ENCODE measurements at regions of chr12 and their contacts with region 1.

Region 1: GRCh38 chr12:132600048-132601032 is 10.0 kb downstream of the LRCOL1 start:
- DNase-seq: peak; percentile 60
- H3K4me3 Mint-ChIP-seq: peak overlapping the region; percentile 57
- H3K27ac Mint-ChIP-seq: no peak overlapping the region
- H3K4me1 Mint-ChIP-seq: peaks cover 32% of the 10 kb centered on the region
- H3K27me3 Mint-ChIP-seq: peaks cover 56% of the 10 kb centered on the region

Region 2: GRCh38 chr12:131990066-131990979 is 610.0 kb before region 1 on chr12:
- CTCF ChIA-PET with region 1: no interaction called
- intact Hi-C with region 1: no loop called
- DNase-seq: no peak
- H3K4me3 Mint-ChIP-seq: no peak overlapping the region
- H3K27ac Mint-ChIP-seq: no peak overlapping the region
- H3K4me1 Mint-ChIP-seq: peaks cover 6% of the 10 kb centered on the region
- H3K27me3 Mint-ChIP-seq: no peaks in the 10 kb centered on the region

Region 3: DNA sequence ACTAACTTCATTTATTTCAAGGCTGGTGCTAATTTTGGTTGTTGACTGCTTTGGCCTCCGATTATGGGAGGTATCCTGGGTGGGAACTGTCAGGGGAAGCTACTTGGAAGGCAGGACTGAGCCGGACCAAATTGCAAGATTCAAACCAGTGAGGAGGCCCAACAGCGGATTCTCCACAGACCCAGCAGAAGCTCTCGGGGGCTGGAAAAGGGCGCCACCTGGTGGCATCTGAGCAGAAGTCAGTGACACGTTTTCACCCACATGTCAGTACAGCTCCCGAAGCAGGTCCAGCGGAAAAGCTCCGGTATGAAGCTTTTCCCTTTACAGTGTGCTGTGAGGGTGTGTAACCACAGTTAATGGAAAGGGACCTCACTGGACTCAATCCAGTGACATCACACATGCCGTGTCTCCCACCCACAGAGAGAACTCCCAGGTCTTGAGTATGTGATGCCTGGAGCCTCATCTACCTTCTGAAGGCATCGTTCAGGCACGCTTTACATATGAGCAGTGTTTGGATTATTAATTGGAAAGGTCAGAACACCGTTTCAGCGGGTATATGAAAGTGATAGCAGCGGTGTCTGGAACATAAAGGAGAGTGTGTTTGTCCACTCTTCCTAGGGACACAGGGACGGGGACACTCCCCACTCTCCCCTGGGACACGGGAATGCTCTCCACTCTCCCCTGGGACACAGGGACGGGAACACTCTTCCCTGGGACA is 14.7 kb after region 1 on chr12:
- CTCF ChIA-PET with region 1: interaction called, 20 read pairs
- intact Hi-C with region 1: loop called (anchors 1 kb)
- DNase-seq: peak; percentile 88
- H3K4me3 Mint-ChIP-seq: no peak overlapping the region
- H3K27ac Mint-ChIP-seq: no peak overlapping the region
- H3K4me1 Mint-ChIP-seq: peaks cover 15% of the 10 kb centered on the region
- H3K27me3 Mint-ChIP-seq: peaks cover 41% of the 10 kb centered on the region

Region 4: DNA sequence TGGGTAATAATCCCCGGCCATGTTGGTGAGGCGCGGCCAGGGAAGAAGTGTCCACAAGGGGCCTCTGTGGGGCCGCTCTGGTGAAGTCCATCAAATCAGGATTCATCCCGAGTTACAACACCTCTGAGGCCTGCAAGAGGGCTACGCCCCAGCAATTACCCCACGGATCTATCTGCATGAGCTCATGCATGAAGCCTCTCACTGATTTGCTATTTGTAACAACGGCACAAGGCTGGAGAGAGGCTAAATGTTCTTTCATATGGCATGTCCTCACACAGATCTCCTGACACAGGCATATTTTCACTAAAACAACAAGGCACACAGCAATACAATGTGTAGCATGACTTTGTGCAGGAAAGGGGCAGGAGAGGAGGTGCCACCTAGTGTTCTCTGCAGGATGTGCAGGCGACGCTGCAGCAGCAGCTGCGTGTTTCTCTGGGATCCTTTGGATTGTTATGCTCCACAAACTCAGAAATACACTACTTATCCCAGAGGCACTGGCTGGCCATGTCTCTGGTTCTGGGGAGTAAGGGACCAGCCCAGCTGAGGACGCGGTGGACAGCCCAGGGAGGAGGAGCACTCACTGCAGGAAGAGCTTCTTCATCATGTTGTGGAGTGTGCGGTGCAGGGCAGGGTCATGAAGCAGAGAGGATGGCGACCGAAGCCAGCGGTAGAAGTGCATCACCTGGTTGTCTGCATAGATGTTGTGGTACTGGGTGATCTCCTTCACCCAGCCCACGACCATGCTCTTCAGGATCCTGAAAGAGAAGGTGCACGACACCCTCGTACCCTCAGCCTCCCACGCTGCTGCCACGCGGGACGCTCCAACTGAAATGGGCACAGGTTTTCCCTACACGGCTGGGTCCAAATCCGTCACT is 38.4 kb after region 1 on chr12:
- CTCF ChIA-PET with region 1: no interaction called
- intact Hi-C with region 1: loop called (anchors 1 kb)
- DNase-seq: no peak
- H3K4me3 Mint-ChIP-seq: no peak overlapping the region
- H3K27ac Mint-ChIP-seq: no peak overlapping the region
- H3K4me1 Mint-ChIP-seq: no peaks in the 10 kb centered on the region
- H3K27me3 Mint-ChIP-seq: no peaks in the 10 kb centered on the region

Measured in activated naive CD4-positive, alpha-beta T cell treated with anti-CD3 and anti-CD28 coated beads for 36 hours (primary cell).